ENCODE measurements at regions of chr4 and their contacts with region 1.

Region 1: GRCh38 chr4:170386971-170387370 is 297.2 kb upstream of the AADAT start:
- DNase-seq: no peak
- H3K4me3 ChIP-seq: no peak overlapping the region
- CTCF ChIP-seq: no peak
- POLR2A ChIP-seq: no peak

Region 2: GRCh38 chr4:170145120-170145519 is 241.9 kb before region 1 on chr4:
- intact Hi-C with region 1: no loop called
- DNase-seq: no peak
- H3K4me3 ChIP-seq: no peak overlapping the region
- CTCF ChIP-seq: no peak
- POLR2A ChIP-seq: no peak

Region 3: GRCh38 chr4:170428929-170429328 is 42.0 kb after region 1 on chr4:
- intact Hi-C with region 1: loop called (anchors 1 kb)
- DNase-seq: no peak
- H3K4me3 ChIP-seq: no peak overlapping the region
- CTCF ChIP-seq: no peak
- POLR2A ChIP-seq: no peak

Measured in lower leg skin (tissue), 4 donors.